Ascending aorta (tissue), 2 donors: ENCODE measurements at regions of chr10 and their contacts with region 1.

Region 1: DNA sequence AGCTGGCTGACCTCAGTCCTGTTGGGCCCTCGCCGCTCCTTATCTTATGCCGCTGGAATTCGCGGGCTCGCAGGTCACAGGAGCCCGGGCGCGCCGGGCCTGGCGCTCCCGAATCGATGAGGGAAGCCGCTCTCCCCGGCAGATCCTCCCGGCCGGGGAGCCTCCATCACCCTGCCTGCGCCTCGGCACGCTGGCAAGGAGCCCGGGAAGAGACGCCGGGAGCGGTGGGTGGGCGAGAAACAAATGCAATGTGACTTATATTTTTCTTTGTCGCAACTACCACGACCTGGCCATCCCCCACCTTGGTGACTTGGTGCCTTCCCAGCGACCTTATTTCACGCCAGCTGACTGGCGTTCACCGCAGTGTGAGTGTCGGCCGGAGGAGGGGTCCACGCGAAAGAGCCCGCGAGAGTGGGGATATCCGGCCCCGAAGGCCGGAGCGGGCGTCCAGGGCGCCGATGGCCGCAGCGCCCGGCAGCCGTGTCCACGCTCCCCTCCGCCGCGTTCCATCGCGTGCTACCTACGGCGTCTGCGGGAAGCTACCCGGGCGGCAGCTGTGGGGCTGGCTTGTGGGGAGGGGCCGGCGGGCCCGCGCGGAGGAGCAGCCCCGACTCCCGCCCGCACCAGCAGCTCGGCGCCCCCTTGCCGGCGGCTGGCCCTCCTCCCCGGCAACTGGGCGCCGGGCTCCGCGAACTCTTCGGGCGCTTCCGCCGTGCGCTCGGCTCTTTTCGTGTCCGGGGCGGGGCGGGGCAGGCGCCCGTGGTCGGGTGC is 494 bp upstream of the BMPR1A start:
- DNase-seq: peak; percentile 33 to 93
- H3K4me3 ChIP-seq: peak overlapping the region; percentile 82 to 96
- H3K27ac ChIP-seq: peak overlapping the region; percentile 100
- H3K4me1 ChIP-seq: peaks cover 5 to 28% of the 10 kb centered on the region in 2 donors
- H3K27me3 ChIP-seq: no peaks in the 10 kb centered on the region
- CTCF ChIP-seq: no peak

Region 2: GRCh38 chr10:86733260-86733671 is 22.7 kb before region 1 on chr10:
- intact Hi-C with region 1: loop called (anchors 1 kb)
- DNase-seq: peak in 1 of 2 donors; percentile 82
- H3K4me3 ChIP-seq: peak overlapping the region; percentile 14 to 17
- H3K27ac ChIP-seq: peak overlapping the region; percentile 83 to 96
- H3K4me1 ChIP-seq: peaks cover 12 to 36% of the 10 kb centered on the region in 2 donors
- H3K27me3 ChIP-seq: no peaks in the 10 kb centered on the region
- CTCF ChIP-seq: peak in 2 of 3 experiments; percentile 21 to 30

Region 3: GRCh38 chr10:86813101-86813500 is 57.2 kb after region 1 on chr10:
- intact Hi-C with region 1: loop called (anchors 5 kb)
- DNase-seq: no peak
- H3K4me3 ChIP-seq: no peak overlapping the region
- H3K27ac ChIP-seq: peak overlapping the region; percentile 28 to 71
- H3K4me1 ChIP-seq: peaks cover 0 to 41% of the 10 kb centered on the region in 2 donors
- H3K27me3 ChIP-seq: no peaks in the 10 kb centered on the region
- CTCF ChIP-seq: no peak

Region 4: GRCh38 chr10:86970162-86970981 is 214.4 kb after region 1 on chr10:
- intact Hi-C with region 1: loop called (anchors 5 kb)
- DNase-seq: peak in 1 of 2 donors; percentile 93
- H3K4me3 ChIP-seq: peak overlapping the region; percentile 68 to 79
- H3K27ac ChIP-seq: peak overlapping the region; percentile 99 to 100
- H3K4me1 ChIP-seq: peaks cover 16 to 39% of the 10 kb centered on the region in 2 donors
- H3K27me3 ChIP-seq: no peaks in the 10 kb centered on the region
- CTCF ChIP-seq: no peak